ENCODE measurements at regions of chr9 and their contacts with region 1.

Region 1: GRCh38 chr9:34984049-34984448 is 5.5 kb upstream of the DNAJB5 start:
- DNase-seq: no peak
- ATAC-seq: no peak
- H3K4me3 ChIP-seq: no peak overlapping the region
- H3K27ac ChIP-seq: no peak overlapping the region
- H3K4me1 ChIP-seq: peaks cover 0 to 38% (median 6%) of the 10 kb centered on the region in 12 donors
- H3K27me3 ChIP-seq: no peaks in the 10 kb centered on the region
- CTCF ChIP-seq: no peak
- POLR2A ChIP-seq: no peak

Region 2: GRCh38 chr9:34723141-34723540 is 260.9 kb before region 1 on chr9:
- intact Hi-C with region 1: no loop called
- DNase-seq: no peak
- ATAC-seq: no peak
- H3K4me3 ChIP-seq: no peak overlapping the region
- H3K27ac ChIP-seq: no peak overlapping the region
- H3K4me1 ChIP-seq: peaks cover 0 to 5% (median 0%) of the 10 kb centered on the region in 12 donors
- H3K27me3 ChIP-seq: no peaks in the 10 kb centered on the region
- CTCF ChIP-seq: no peak
- POLR2A ChIP-seq: no peak

Region 3: DNA sequence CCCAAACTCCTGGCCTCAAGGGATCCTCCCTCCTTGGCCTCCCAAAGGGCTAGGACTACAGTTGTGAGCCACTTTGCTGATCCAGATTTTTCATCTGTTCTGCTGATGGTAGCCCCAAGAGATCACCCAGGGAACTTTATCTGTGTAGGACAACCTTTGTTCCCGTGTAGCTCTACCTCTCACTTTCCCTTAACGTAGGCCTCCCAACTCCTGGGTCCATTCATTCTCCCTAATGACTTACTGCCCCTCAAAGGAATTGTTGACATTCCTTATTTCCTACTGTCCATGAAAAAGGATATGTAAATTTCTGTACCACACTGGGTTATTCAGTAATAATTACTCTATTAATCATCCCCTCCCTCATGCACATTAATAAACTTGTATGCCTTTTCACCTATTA is 77.0 kb before region 1 on chr9:
- intact Hi-C with region 1: loop called in 2 of 10 experiments (anchors 2 to 5 kb)
- DNase-seq: no peak
- ATAC-seq: no peak
- H3K4me3 ChIP-seq: no peak overlapping the region
- H3K27ac ChIP-seq: no peak overlapping the region
- H3K4me1 ChIP-seq: no peaks in the 10 kb centered on the region
- H3K27me3 ChIP-seq: peaks cover 0 to 13% (median 0%) of the 10 kb centered on the region in 9 donors
- CTCF ChIP-seq: no peak
- POLR2A ChIP-seq: no peak

Region 4: GRCh38 chr9:35172878-35173277 is 188.8 kb after region 1 on chr9:
- intact Hi-C with region 1: no loop called
- DNase-seq: no peak
- ATAC-seq: no peak
- H3K4me3 ChIP-seq: no peak overlapping the region
- H3K27ac ChIP-seq: no peak overlapping the region
- H3K4me1 ChIP-seq: peaks cover 0 to 16% (median 2%) of the 10 kb centered on the region in 12 donors
- H3K27me3 ChIP-seq: no peaks in the 10 kb centered on the region
- CTCF ChIP-seq: no peak
- POLR2A ChIP-seq: no peak